Activated CD8-positive, alpha-beta T cell treated with anti-CD3 and anti-CD28 coated beads for 36 hours (primary cell): ENCODE measurements at regions of chr16 and their contacts with region 1.

Region 1: GRCh38 chr16:57066625-57067024 is 25.8 kb upstream of the CPNE2 start:
- DNase-seq: no peak
- ATAC-seq: no peak
- H3K4me3 Mint-ChIP-seq: no peak overlapping the region
- H3K27ac Mint-ChIP-seq: peak overlapping the region; percentile 23
- H3K4me1 Mint-ChIP-seq: peaks cover 29% of the 10 kb centered on the region
- H3K27me3 Mint-ChIP-seq: no peaks in the 10 kb centered on the region
- CTCF ChIP-seq: no peak

Region 2: GRCh38 chr16:56898847-56899246 is 167.8 kb before region 1 on chr16:
- CTCF ChIA-PET with region 1: no interaction called
- POLR2A ChIA-PET with region 1: no interaction called
- intact Hi-C with region 1: no loop called
- DNase-seq: peak; percentile 42
- ATAC-seq: peak; percentile 83
- H3K4me3 Mint-ChIP-seq: no peak overlapping the region
- H3K27ac Mint-ChIP-seq: no peak overlapping the region
- H3K4me1 Mint-ChIP-seq: peaks cover 18% of the 10 kb centered on the region
- H3K27me3 Mint-ChIP-seq: peaks cover 3% of the 10 kb centered on the region
- CTCF ChIP-seq: no peak

Region 3: GRCh38 chr16:57051696-57052228 is 14.9 kb before region 1 on chr16:
- CTCF ChIA-PET with region 1: interaction called, 3 read pairs
- POLR2A ChIA-PET with region 1: interaction called, 13 read pairs
- intact Hi-C with region 1: no loop called
- DNase-seq: peak; percentile 61
- ATAC-seq: no peak
- H3K4me3 Mint-ChIP-seq: peak overlapping the region; percentile 29
- H3K27ac Mint-ChIP-seq: peak overlapping the region; percentile 91
- H3K4me1 Mint-ChIP-seq: peaks cover 56% of the 10 kb centered on the region
- H3K27me3 Mint-ChIP-seq: no peaks in the 10 kb centered on the region
- CTCF ChIP-seq: no peak

Region 4: GRCh38 chr16:57077714-57078113 is 11.1 kb after region 1 on chr16:
- CTCF ChIA-PET with region 1: interaction called, 6 read pairs
- POLR2A ChIA-PET with region 1: interaction called, 15 read pairs
- intact Hi-C with region 1: no loop called
- DNase-seq: no peak
- ATAC-seq: no peak
- H3K4me3 Mint-ChIP-seq: no peak overlapping the region
- H3K27ac Mint-ChIP-seq: no peak overlapping the region
- H3K4me1 Mint-ChIP-seq: no peaks in the 10 kb centered on the region
- H3K27me3 Mint-ChIP-seq: no peaks in the 10 kb centered on the region
- CTCF ChIP-seq: no peak